ENCODE measurements at regions of chr12 and their contacts with region 1.

Region 1: GRCh38 chr12:69639400-69640016 is 28.8 kb upstream of the LRRC10 start:
- DNase-seq: peak; percentile 38 to 79
- ATAC-seq: peak; percentile 70 to 81 (median 76)
- H3K4me3 ChIP-seq: no peak overlapping the region
- H3K4me3 Mint-ChIP-seq: no peak overlapping the region
- H3K27ac ChIP-seq: no peak overlapping the region
- H3K27ac Mint-ChIP-seq: no peak overlapping the region
- H3K4me1 ChIP-seq: no peaks in the 10 kb centered on the region
- H3K4me1 Mint-ChIP-seq: no peaks in the 10 kb centered on the region
- H3K27me3 ChIP-seq: no peaks in the 10 kb centered on the region
- H3K27me3 Mint-ChIP-seq: peaks cover 0 to 3% of the 10 kb centered on the region in 2 donors
- CTCF ChIP-seq: peak; percentile 82

Region 2: DNA sequence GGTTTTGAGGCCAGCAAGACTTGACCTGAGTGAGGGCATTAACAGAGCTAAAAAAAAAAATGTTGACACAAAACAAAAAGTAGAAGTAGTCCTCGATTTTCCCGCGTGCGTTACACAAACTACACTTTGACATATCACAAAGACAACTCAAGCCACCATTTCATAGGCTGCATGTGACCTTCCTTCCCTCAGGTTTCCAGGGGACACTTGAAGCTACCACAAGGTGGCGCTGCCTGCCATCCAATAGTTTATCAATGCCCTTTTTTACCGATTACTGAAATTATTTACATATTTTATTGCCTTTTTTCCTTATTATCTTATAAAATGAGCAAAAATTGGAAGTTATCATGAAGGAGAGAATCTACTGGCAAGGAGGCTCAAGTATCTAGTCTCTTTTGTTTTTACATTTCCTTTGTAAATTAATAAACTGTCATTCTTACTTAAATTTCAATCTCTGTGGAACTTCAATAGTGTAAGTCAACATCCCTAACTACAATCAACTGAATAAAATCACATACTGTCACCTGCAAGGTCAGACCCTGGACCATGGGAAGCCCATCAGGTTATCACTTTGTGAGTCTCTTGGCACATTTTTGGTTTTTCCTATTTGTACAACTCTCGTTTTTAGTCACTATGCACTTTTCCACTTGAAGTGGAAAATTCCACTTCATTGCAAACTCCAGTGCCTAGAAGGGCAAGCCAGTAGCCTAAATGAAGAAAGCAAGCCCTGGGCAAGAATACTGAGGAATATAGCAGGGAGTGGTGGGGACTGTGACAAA is 484.7 kb before region 1 on chr12:
- intact Hi-C with region 1: loop called (anchors 2 kb)
- DNase-seq: peak; percentile 64 to 91
- ATAC-seq: peak; percentile 56 to 60 (median 59)
- H3K4me3 ChIP-seq: no peak overlapping the region
- H3K4me3 Mint-ChIP-seq: no peak overlapping the region
- H3K27ac ChIP-seq: no peak overlapping the region
- H3K27ac Mint-ChIP-seq: no peak overlapping the region
- H3K4me1 ChIP-seq: peaks cover 7% of the 10 kb centered on the region
- H3K4me1 Mint-ChIP-seq: peaks cover 0 to 6% of the 10 kb centered on the region in 2 donors
- H3K27me3 ChIP-seq: no peaks in the 10 kb centered on the region
- H3K27me3 Mint-ChIP-seq: no peaks in the 10 kb centered on the region
- CTCF ChIP-seq: peak; percentile 94

Region 3: DNA sequence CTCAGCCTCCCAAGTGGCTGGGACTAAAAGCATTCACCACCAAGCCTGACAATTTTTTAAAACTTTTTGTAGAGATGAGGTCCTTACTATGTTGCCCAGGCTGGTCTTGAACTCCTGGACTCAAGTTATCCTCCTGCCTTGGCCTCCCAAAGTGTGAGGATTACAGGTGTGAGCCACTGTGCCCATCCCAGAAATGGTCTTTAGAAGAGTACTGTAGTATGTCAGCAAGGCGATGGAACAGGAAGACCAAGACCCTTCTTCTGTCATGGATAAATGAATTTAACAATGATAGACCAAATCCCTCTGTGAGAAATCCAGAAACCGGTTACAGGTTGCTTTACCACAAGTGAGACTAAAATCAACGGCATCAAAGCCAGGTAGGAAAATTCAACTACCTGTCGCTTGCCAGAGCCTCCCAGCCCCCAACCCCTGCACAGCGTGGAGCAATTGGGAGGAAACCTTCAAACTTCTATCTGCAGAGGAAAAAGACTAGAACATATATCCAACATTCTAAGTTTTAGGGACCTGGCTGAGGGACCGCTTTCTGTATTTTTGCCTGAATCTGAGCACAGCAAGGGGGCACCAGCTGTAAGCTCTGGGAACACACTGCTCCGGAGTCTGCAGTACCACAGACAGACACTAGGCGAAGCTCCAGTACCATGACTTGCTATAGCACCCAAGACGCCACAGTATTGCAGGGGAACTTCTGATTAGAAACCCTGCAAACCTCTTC is 348.8 kb before region 1 on chr12:
- intact Hi-C with region 1: loop called (anchors 1 kb)
- DNase-seq: peak; percentile 66 to 91
- ATAC-seq: peak; percentile 97 to 100 (median 100)
- H3K4me3 ChIP-seq: no peak overlapping the region
- H3K4me3 Mint-ChIP-seq: no peak overlapping the region
- H3K27ac ChIP-seq: no peak overlapping the region
- H3K27ac Mint-ChIP-seq: no peak overlapping the region
- H3K4me1 ChIP-seq: peaks cover 3% of the 10 kb centered on the region
- H3K4me1 Mint-ChIP-seq: no peaks in the 10 kb centered on the region
- H3K27me3 ChIP-seq: peaks cover 2% of the 10 kb centered on the region
- H3K27me3 Mint-ChIP-seq: peaks cover 43 to 64% of the 10 kb centered on the region in 2 donors
- CTCF ChIP-seq: peak; percentile 87

Measured in natural killer cell (primary cell).